ENCODE measurements at regions of chr20 and their contacts with region 1.

Region 1: DNA sequence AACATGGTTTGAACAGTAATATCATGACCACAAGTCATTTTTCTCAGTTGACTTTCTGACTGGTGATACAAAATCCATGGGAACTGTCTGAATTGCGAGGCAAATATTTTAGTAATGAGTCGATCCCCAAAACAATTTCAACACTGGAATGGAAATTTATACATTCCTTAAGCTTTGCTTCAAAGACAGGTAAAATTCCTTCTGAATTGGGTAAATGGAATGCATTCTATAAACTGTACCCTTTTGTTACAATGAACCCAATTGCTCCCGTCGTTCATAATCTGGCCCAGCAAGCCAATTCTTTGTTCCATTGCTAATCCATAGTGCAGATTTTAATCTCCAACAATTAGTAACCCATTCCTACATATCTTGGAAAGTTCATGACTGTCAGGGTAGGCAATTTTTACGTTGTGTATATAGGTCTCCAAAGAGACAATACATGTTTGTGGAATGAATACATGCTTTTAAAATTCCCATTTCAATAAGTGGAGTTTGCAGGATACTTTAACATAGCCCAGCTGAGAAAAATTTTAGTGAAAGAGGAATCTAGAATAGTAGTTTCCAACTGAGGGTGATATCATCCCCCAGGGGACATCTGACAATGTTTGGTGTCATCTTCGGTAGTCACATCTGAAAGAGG is 32.7 kb downstream of the CYP24A1 start:
- DNase-seq: peak; percentile 91
- H3K4me3 ChIP-seq: no peak overlapping the region
- H3K27ac ChIP-seq: peak overlapping the region; percentile 90
- H3K4me1 ChIP-seq: peaks cover 33% of the 10 kb centered on the region
- H3K27me3 ChIP-seq: no peaks in the 10 kb centered on the region
- CTCF ChIP-seq: no peak

Region 2: DNA sequence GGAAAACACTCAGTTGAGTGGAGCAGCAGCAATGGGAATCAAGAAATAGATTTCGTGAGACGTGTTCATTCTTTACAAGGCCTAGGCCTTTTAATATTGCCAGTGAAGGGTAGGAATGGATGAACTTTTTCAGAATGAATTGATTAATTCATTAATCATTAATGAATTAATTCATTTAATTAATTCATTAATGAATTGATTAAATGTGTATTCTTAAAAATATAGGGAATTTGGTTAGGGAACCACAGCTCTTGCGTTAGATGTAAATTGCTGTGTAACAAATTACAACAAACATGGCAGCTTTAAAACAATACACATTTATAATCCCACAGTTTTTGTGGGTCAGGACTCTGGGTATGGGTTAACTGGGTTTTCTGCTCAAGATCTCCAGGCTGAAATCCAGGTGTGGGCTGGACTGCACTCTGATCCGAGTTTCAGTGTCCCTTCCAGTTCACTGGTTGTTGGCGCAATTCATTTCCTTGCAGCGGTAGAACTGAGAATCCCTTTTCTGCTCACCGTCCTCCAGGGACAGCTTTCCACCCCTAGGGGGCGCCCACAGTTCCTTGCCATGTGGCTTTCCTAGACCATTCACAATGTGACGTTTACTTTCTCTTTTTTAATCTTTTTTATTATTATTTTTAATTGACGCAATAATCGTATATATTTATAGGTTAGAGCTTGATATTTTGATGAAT is 37.8 kb before region 1 on chr20:
- CTCF ChIA-PET with region 1: no interaction called
- dilution Hi-C with region 1: no loop called
- in situ Hi-C with region 1: no loop called
- intact Hi-C with region 1: loop called (anchors 2 kb)
- DNase-seq: no peak
- H3K4me3 ChIP-seq: no peak overlapping the region
- H3K27ac ChIP-seq: no peak overlapping the region
- H3K4me1 ChIP-seq: peaks cover 32% of the 10 kb centered on the region
- H3K27me3 ChIP-seq: no peaks in the 10 kb centered on the region
- CTCF ChIP-seq: peak; percentile 64 to 74

Measured in mammary epithelial cell (primary cell).